Mammary epithelial cell (primary cell): ENCODE measurements at regions of chr19 and their contacts with region 1.

Region 1: GRCh38 chr19:45250832-45251451 is at the start of gene MARK4:
- DNase-seq: peak; percentile 61
- H3K4me3 ChIP-seq: peak within 1 kb of the TSS; percentile 64 to 83 (median 76)
- H3K27ac ChIP-seq: peak within 1 kb of the TSS; percentile 48
- H3K4me1 ChIP-seq: peaks cover 31% of the 10 kb centered on the region
- H3K27me3 ChIP-seq: no peaks in the 10 kb centered on the region
- CTCF ChIP-seq: no peak
- total RNA-seq, gene MARK4: 13.3 to 48.9 TPM

Region 2: GRCh38 chr19:45187421-45188100 is 63.4 kb before region 1 on chr19:
- CTCF ChIA-PET with region 1: no interaction called
- dilution Hi-C with region 1: no loop called
- in situ Hi-C with region 1: loop called in 1 of 2 experiments (anchors 10 kb)
- intact Hi-C with region 1: loop called (anchors 1 kb)
- DNase-seq: no peak
- H3K4me3 ChIP-seq: no peak overlapping the region
- H3K27ac ChIP-seq: no peak overlapping the region
- H3K4me1 ChIP-seq: peaks cover 8% of the 10 kb centered on the region
- H3K27me3 ChIP-seq: no peaks in the 10 kb centered on the region
- CTCF ChIP-seq: peak; percentile 57 to 59

Region 3: GRCh38 chr19:45200568-45200994 is 50.4 kb before region 1 on chr19:
- CTCF ChIA-PET with region 1: no interaction called
- dilution Hi-C with region 1: no loop called
- in situ Hi-C with region 1: loop called in 1 of 2 experiments (anchors 10 kb)
- intact Hi-C with region 1: loop called (anchors 1 kb)
- DNase-seq: peak; percentile 30
- H3K4me3 ChIP-seq: no peak overlapping the region
- H3K27ac ChIP-seq: no peak overlapping the region
- H3K4me1 ChIP-seq: no peaks in the 10 kb centered on the region
- H3K27me3 ChIP-seq: no peaks in the 10 kb centered on the region
- CTCF ChIP-seq: peak; percentile 39 to 47

Region 4: GRCh38 chr19:45283443-45284033 is 32.6 kb after region 1 on chr19:
- CTCF ChIA-PET with region 1: no interaction called
- dilution Hi-C with region 1: no loop called
- in situ Hi-C with region 1: no loop called
- intact Hi-C with region 1: loop called (anchors 2 kb)
- DNase-seq: no peak
- H3K4me3 ChIP-seq: no peak overlapping the region
- H3K27ac ChIP-seq: no peak overlapping the region
- H3K4me1 ChIP-seq: no peaks in the 10 kb centered on the region
- H3K27me3 ChIP-seq: no peaks in the 10 kb centered on the region
- CTCF ChIP-seq: no peak

Region 5: DNA sequence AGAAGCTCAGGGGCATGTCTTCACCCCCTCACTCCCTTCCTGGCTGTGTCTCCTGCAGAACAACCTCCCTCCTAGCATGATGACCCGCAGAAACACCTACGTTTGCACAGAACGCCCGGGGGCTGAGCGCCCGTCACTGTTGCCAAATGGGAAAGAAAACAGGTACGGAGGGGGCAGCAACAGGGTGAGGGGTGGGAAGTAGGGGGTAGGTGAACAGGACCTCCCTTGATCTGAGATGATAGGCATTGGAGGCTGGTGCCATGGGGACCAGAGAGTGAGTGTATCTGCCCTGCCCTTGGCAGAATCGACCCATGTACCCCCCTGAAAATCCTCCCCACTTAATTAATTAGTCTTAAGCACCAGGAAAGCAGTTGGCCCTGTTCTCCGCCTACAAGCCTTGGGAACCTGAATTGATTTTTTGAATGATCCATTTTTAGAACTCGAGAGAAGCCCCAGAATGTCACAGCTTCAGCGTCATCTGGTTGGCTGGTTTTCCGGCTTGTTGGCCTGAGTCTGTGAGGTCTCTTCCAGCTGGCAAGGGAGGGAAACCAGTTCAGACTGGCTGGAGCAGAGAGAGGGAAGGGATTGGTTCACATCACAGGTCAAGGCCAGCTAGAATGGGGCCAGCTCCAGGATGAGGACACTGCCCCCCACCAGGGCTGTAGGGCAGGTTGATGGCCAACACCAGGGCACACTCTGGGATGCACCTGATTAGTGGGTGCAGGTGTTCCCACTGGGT is 43.5 kb after region 1 on chr19:
- CTCF ChIA-PET with region 1: no interaction called
- dilution Hi-C with region 1: no loop called
- in situ Hi-C with region 1: no loop called
- intact Hi-C with region 1: no loop called
- DNase-seq: no peak
- H3K4me3 ChIP-seq: no peak overlapping the region
- H3K27ac ChIP-seq: no peak overlapping the region
- H3K4me1 ChIP-seq: peaks cover 12% of the 10 kb centered on the region
- H3K27me3 ChIP-seq: no peaks in the 10 kb centered on the region
- CTCF ChIP-seq: no peak

Region 6: GRCh38 chr19:45331423-45331822 is 80.5 kb after region 1 on chr19:
- CTCF ChIA-PET with region 1: no interaction called
- dilution Hi-C with region 1: no loop called
- in situ Hi-C with region 1: no loop called
- intact Hi-C with region 1: no loop called
- DNase-seq: no peak
- H3K4me3 ChIP-seq: no peak overlapping the region
- H3K27ac ChIP-seq: no peak overlapping the region
- H3K4me1 ChIP-seq: no peaks in the 10 kb centered on the region
- H3K27me3 ChIP-seq: no peaks in the 10 kb centered on the region
- CTCF ChIP-seq: no peak

Region 7: DNA sequence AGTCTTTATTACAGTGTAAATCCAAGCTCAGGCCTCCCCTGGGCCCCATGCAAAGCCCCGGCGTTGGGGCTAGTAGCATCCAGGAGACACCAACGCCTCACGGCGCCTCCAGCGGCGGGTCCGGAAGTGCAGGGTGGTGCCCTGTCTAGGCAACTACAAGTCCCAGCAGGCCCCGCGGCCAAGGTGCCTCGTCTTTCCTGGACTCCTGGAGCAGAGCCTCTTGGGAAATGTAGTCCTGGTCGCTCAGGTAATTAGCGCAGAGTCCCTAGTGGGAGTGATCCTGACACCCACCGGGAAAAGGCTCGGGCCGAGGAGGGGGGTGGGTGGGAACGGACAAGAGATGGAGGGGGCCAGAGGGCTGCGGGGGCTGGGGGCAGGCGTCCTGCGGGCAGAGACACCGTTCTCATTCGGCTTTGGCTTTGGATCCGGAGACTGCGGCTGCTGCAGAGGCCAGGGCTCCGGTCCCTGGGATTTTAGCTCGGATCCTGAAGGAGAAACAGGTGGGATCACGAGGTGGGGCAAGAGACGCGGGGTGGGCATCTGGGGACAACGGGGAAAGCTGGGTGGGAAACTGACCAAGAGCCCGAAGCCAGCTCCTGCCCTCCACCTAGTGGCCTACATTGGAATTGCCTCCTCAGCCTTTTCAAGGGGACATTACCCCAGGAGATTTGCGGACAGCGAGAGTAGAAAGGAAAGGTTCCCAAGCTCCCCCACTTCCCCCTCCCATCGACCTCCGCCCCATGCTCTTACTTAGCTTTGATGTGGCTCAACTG is 234.5 kb after region 1 on chr19:
- CTCF ChIA-PET with region 1: no interaction called
- dilution Hi-C with region 1: no loop called
- in situ Hi-C with region 1: no loop called
- intact Hi-C with region 1: loop called (anchors 2 kb)
- DNase-seq: peak; percentile 88
- H3K4me3 ChIP-seq: peak overlapping the region; percentile 40 to 61 (median 44)
- H3K27ac ChIP-seq: no peak overlapping the region
- H3K4me1 ChIP-seq: no peaks in the 10 kb centered on the region
- H3K27me3 ChIP-seq: no peaks in the 10 kb centered on the region
- CTCF ChIP-seq: peak; percentile 89 to 90